H1 (cell line): ENCODE measurements at regions of chr5 and their contacts with region 1.

Region 1: DNA sequence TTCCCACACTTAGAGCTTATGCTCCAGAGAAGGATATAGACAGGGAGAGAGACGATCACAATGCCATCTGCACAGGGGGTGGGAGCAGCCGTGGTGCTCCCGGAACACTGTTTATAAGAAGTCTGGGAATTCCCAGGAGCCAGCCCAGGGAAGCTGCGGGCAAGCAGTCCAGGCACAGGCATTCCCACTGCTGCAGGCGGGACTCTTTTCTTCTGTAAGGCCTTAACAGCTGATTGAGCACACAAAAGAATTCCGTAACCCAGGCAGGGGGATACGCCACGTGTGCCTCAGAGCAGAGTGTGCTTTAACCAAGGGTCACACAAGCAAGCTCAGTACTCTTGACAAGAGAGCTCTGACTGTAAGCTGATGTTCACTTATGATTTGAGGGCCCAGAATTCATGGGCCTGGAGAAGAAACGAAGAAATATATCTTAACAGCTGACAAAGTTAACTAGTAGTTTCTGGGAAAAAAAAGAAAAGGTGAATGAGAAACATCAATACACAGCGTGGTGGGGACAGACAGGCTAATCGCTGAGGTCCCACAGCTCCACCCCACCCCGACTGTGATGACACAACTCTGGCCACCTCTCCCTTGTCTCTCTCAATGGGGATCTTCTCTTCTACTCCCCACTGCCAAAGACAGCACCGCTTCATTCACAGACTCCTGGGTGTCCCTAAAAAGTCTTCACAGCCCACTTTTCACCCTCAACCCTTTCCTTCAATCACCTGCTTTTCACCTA is 85.9 kb upstream of the SIMC1 start:
- DNase-seq: no peak
- H3K4me3 ChIP-seq: peak overlapping the region in 1 of 4 experiments; percentile 5; a peak in 1 of 8 replicates
- H3K27ac ChIP-seq: no peak overlapping the region
- H3K4me1 ChIP-seq: peaks cover 0 to 15% (median 7%) of the 10 kb centered on the region in 4 experiments; a peak in 5 of 7 replicates
- H3K27me3 ChIP-seq: no peaks in the 10 kb centered on the region; a peak in 2 of 7 replicates
- CTCF ChIP-seq: no peak
- EP300 ChIP-seq: no peak
- POLR2A ChIP-seq: no peak
- RAD21 ChIP-seq: no peak

Region 2: DNA sequence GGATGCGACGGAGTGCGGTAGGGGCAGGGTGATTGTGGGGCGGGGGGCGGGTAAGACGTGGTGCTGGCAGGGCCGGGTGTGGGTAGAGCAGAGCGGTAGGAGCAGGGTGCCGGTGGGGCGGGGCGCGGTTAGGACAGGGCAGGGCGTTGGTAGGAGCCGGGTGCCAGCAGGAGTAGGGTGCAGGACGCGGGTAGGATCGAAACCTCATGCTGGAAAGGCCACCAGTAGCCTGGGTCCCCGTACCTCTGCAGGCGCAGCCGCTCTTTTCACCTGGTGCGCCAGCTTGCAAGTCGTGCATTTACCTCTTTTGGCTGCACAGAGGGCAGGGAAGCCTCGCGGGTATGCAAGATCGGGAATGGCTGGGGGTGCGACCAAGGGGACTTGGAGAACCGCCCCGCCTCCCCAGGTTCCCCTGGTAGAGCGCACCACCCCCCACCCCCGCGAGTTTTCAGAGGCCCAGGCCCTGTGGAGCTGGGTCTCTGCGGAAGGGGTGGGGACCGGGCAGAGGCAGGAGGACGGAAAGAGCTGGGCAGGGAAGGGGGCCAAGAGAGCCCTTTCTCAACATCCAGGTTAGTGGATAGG is 19.0 kb before region 1 on chr5:
- CTCF ChIA-PET with region 1: interaction called, 11 read pairs
- POLR2A ChIA-PET with region 1: interaction called, 3 read pairs
- DNase-seq: peak in 1 of 2 experiments; percentile 67
- H3K4me3 ChIP-seq: peak overlapping the region; percentile 34 to 67 (median 40)
- H3K27ac ChIP-seq: no peak overlapping the region
- H3K4me1 ChIP-seq: peaks cover 2 to 6% (median 4%) of the 10 kb centered on the region in 4 experiments; a peak in 6 of 7 replicates
- H3K27me3 ChIP-seq: peaks cover 4 to 33% (median 29%) of the 10 kb centered on the region in 4 experiments
- CTCF ChIP-seq: no peak
- EP300 ChIP-seq: no peak
- POLR2A ChIP-seq: no peak
- RAD21 ChIP-seq: no peak